Lower lobe of right lung (tissue), 2 donors: ENCODE measurements at regions of chr11 and their contacts with region 1.

Region 1: DNA sequence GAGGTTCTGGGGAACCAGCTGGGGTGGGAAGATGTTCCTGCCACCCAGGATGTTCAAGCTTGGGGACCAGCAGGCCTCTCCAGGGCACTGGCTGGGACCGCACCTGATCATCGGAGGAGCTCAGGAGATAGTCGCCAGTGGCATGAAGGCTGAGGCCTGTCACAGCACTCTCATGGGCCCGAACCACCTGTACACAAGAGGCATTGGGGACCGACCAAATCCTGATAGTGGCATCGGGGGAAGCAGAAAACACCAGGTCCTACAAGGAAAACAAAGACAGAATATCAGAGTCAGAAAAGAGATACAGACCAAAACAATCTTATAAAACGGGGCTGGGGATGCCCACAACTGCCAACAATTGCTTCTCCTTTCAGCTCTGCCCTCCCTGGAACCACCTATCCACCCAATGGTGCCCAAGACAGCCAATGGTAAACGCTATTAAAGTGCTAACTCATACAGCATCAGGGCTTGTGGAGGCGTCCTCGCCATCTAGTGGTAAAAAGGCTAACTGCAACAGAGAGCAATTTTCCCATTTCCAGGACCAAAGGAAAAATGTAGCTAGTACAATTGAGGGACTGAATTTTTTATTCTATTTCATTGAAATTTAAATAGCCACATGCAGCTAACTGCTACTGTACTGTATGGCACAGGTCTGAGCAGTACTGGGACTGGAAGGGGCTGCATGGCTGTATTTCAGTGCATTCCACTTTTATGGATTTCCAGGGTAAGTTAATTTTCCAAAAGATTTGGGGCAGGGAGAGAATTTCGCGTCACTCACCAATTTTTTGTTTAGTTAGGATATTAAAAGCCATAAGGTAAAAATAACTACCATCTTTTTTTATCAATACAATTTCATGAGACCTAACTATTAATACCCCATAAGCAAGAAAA is 7.1 kb downstream of the PRPF19 start:
- DNase-seq: no peak
- ATAC-seq: peak; percentile 79 to 83
- H3K4me3 ChIP-seq: no peak overlapping the region
- H3K27ac ChIP-seq: no peak overlapping the region
- H3K4me1 ChIP-seq: peaks cover 7% of the 10 kb centered on the region
- H3K27me3 ChIP-seq: no peaks in the 10 kb centered on the region
- CTCF ChIP-seq: peak; percentile 94

Region 2: DNA sequence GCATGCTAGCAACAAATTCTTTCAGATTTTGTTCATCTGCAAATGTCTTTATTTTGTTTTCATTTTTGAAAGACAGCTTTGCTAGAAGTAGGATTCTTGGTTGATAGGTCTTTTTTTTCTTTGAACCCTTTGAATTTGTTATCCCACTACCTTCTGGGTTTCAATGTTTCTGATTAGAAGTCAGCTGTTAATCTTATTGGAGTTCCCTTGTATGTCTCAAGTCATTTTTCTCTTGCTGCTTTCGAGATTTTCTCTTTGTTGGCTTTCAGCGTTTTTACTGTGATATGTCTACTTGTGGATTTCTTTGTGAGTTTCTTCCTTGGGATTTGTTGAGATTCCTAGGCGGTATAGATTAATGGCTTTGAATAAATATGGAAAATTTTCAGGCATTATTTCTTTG is 227.0 kb before region 1 on chr11:
- intact Hi-C with region 1: no loop called
- DNase-seq: no peak
- ATAC-seq: no peak
- H3K4me3 ChIP-seq: no peak overlapping the region
- H3K27ac ChIP-seq: no peak overlapping the region
- H3K4me1 ChIP-seq: no peaks in the 10 kb centered on the region
- H3K27me3 ChIP-seq: no peaks in the 10 kb centered on the region
- CTCF ChIP-seq: no peak

Region 3: GRCh38 chr11:60831143-60831500 is 68.2 kb before region 1 on chr11:
- intact Hi-C with region 1: loop called (anchors 5 kb)
- DNase-seq: peak; percentile 88
- ATAC-seq: peak; percentile 90 to 93
- H3K4me3 ChIP-seq: no peak overlapping the region
- H3K27ac ChIP-seq: no peak overlapping the region
- H3K4me1 ChIP-seq: no peaks in the 10 kb centered on the region
- H3K27me3 ChIP-seq: peaks cover 27% of the 10 kb centered on the region
- CTCF ChIP-seq: peak; percentile 97